Cardiac septum (tissue), 1 donor: ENCODE measurements at regions of chr2 and their contacts with region 1.

Region 1: GRCh38 chr2:181810823-181811695 is 80.5 kb upstream of the ITPRID2 start:
- DNase-seq: no peak

Region 2: GRCh38 chr2:181581534-181581933 is 229.5 kb before region 1 on chr2:
- intact Hi-C with region 1: no loop called
- DNase-seq: no peak

Region 3: GRCh38 chr2:181891966-181892798 is 81.1 kb after region 1 on chr2:
- intact Hi-C with region 1: loop called (anchors 2 kb)
- DNase-seq: peak; percentile 88